Breast epithelium (tissue), 4 donors: ENCODE measurements at regions of chr1 and their contacts with region 1.

Region 1: DNA sequence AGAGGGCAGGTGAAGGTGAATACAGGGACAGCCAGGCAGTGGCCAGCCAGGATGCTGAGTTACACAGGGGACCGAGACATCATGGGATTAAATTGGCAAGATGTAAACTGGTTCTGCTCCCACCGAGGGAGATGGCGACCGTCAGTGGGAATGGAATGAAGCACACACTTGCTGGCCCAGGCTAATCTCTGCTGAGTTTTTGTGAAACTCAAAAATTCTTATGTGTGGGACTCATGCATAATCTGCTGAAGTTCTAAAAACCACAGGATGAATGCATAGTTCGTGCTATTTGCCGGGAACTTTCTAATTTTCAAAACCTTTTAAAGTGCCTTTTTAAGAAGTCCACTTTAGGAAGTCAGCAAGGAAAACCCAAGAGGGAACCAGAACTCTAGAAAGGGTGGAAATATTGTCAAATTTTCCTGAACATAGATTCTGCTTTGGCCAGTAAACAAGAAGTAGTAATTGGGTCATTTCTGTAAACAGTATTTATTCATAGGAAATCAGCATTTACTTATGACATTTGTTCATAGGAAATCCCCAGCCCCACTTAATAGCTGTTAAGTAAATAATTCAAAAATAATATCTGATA is 85.4 kb upstream of the ROR1 start:
- DNase-seq: no peak
- H3K4me3 ChIP-seq: no peak overlapping the region
- H3K27ac ChIP-seq: no peak overlapping the region
- H3K4me1 ChIP-seq: no peaks in the 10 kb centered on the region
- H3K27me3 ChIP-seq: no peaks in the 10 kb centered on the region
- CTCF ChIP-seq: no peak
- POLR2A ChIP-seq: no peak

Region 2: GRCh38 chr1:62318756-62319544 is 1369.4 kb before region 1 on chr1 and contains the start of gene KANK4:
- intact Hi-C with region 1: no loop called
- DNase-seq: no peak
- H3K4me3 ChIP-seq: peak within 1 kb of the TSS; percentile 21 to 67 (median 61)
- H3K27ac ChIP-seq: no peak within 1 kb of the TSS
- H3K4me1 ChIP-seq: no peaks in the 10 kb centered on the region
- H3K27me3 ChIP-seq: peaks cover 0 to 16% of the 10 kb centered on the region in 2 donors
- CTCF ChIP-seq: no peak
- POLR2A ChIP-seq: no peak
- total RNA-seq, gene KANK4: 0.48 to 1.6 (median 0.66) TPM

Region 3: GRCh38 chr1:63746129-63746864 is 57.9 kb after region 1 on chr1:
- intact Hi-C with region 1: no loop called
- DNase-seq: no peak
- H3K4me3 ChIP-seq: no peak overlapping the region
- H3K27ac ChIP-seq: no peak overlapping the region
- H3K4me1 ChIP-seq: no peaks in the 10 kb centered on the region
- H3K27me3 ChIP-seq: no peaks in the 10 kb centered on the region
- CTCF ChIP-seq: no peak
- POLR2A ChIP-seq: no peak

Region 4: GRCh38 chr1:64136752-64137411 is 448.5 kb after region 1 on chr1:
- intact Hi-C with region 1: loop called (anchors 5 kb)
- DNase-seq: peak; percentile 77
- H3K4me3 ChIP-seq: no peak overlapping the region
- H3K27ac ChIP-seq: peak overlapping the region in 1 of 2 donors; percentile 3
- H3K4me1 ChIP-seq: no peaks in the 10 kb centered on the region
- H3K27me3 ChIP-seq: no peaks in the 10 kb centered on the region
- CTCF ChIP-seq: peak; percentile 73 to 89 (median 84)
- POLR2A ChIP-seq: no peak